ENCODE measurements at regions of chr11 and their contacts with region 1.

Region 1: GRCh38 chr11:64284048-64284961 is at the start of gene BAD:
- DNase-seq: peak; percentile 87 to 95 (median 91)
- ATAC-seq: peak; percentile 77
- H3K4me3 ChIP-seq: peak within 1 kb of the TSS; percentile 97
- H3K4me3 Mint-ChIP-seq: peak within 1 kb of the TSS; percentile 93
- H3K27ac ChIP-seq: peak within 1 kb of the TSS; percentile 99 to 100
- H3K27ac Mint-ChIP-seq: peak within 1 kb of the TSS; percentile 97
- H3K4me1 ChIP-seq: peaks cover 37% of the 10 kb centered on the region
- H3K4me1 Mint-ChIP-seq: peaks cover 21% of the 10 kb centered on the region
- H3K27me3 ChIP-seq: no peaks in the 10 kb centered on the region
- H3K27me3 Mint-ChIP-seq: no peaks in the 10 kb centered on the region
- CTCF ChIP-seq: no peak
- total RNA-seq, gene BAD: 22.5 to 23.0 TPM

Region 2: DNA sequence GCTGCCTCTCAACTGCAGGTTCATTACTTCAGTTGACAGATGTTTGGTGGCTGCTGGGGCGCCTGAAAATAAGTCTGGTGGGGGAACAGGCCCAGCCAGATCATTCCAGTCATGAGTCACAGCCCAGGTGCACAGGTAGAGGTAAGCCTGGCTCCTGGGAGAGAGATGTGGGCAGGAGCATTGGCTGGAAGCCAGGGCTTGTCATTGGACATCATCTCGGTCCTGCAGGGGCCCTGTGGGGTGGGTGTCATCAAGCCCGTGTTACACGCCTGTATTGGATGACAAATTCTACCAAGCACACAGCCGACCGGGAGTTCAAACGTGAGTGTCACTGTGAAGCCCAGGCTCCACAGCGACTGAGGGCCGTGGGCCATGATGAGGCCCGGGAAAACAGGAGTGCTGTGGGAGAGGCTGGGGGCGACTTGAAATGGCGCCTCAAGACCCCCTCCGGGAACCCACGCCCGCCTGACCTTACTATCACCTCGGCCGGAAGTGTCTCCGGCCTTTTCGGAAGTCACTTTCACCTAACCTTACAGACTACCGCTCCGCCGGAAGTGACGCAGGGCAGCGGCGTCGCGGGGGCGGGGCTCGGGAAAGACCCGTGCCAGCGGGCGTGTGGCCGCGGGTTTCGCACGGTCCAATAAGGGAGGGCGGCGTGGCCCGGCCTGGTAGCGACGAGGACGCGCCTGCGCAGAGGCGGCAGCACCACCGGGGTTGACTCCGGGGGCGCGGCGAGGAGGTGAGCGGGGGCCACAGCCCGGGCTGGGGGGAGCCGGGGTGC is 43.7 kb before region 1 on chr11 and contains the start of gene FKBP2:
- CTCF ChIA-PET with region 1: no interaction called
- POLR2A ChIA-PET with region 1: interaction called, 13 read pairs
- intact Hi-C with region 1: loop called (anchors 1 to 2 kb)
- DNase-seq: peak; percentile 92 to 100 (median 97)
- ATAC-seq: peak; percentile 66
- H3K4me3 ChIP-seq: peak within 1 kb of the TSS; percentile 80
- H3K4me3 Mint-ChIP-seq: peak within 1 kb of the TSS; percentile 98
- H3K27ac ChIP-seq: peak within 1 kb of the TSS; percentile 97 to 100
- H3K27ac Mint-ChIP-seq: peak within 1 kb of the TSS; percentile 100
- H3K4me1 ChIP-seq: peaks cover 59% of the 10 kb centered on the region
- H3K4me1 Mint-ChIP-seq: peaks cover 40% of the 10 kb centered on the region
- H3K27me3 ChIP-seq: no peaks in the 10 kb centered on the region
- H3K27me3 Mint-ChIP-seq: no peaks in the 10 kb centered on the region
- CTCF ChIP-seq: no peak
- total RNA-seq, gene FKBP2: 11.2 to 14.6 TPM

Region 3: DNA sequence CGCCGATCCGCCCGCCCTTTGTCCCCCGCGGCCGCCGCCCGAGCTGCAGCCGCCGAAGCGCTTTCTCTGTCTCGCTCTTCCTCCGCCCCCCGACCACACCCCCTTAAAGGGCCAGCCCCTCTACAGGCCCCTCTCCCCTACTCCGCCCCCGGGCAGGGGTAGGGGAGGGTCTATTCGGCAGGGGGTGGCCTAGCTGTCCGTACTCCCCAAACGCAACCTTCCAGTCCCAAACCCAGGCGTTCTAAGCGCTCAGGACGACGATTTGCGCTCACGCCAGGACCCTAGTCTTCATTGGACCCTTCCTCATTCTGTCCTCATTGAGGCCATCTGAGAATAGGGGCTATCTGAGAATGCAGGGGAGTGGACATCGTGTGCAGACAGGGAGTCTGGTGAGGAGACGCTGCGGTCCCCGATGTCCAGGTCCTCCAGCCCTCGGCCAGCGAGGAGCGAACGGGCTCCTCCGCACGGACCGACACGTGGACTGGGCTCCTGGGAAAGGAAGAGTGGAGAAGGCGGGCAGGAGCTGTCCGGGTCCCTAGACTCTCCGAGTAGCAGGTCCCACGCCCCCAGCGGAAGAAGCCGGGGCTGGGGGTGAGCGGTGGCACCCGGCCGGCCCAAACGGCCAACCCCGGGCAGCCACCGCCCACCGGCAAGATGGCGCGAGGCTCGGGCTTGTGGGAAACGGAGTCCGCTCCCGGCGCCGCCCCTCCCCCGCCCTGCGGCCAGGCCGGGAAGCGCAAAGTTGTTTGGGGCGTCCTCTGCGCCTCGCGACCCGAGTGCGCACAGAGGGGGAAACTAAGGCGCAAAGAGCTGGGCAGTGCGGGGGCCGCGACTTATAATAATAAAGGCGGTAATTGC is 37.2 kb before region 1 on chr11 and contains the start of gene PPP1R14B:
- CTCF ChIA-PET with region 1: no interaction called
- POLR2A ChIA-PET with region 1: interaction called, 13 read pairs
- intact Hi-C with region 1: no loop called
- DNase-seq: peak; percentile 60 to 89 (median 76)
- ATAC-seq: peak; percentile 63
- H3K4me3 ChIP-seq: peak within 1 kb of the TSS; percentile 90
- H3K4me3 Mint-ChIP-seq: peak within 1 kb of the TSS; percentile 94
- H3K27ac ChIP-seq: peak within 1 kb of the TSS; percentile 48 to 57
- H3K27ac Mint-ChIP-seq: peak within 1 kb of the TSS; percentile 82
- H3K4me1 ChIP-seq: peaks cover 61% of the 10 kb centered on the region
- H3K4me1 Mint-ChIP-seq: peaks cover 41% of the 10 kb centered on the region
- H3K27me3 ChIP-seq: no peaks in the 10 kb centered on the region
- H3K27me3 Mint-ChIP-seq: no peaks in the 10 kb centered on the region
- CTCF ChIP-seq: no peak
- total RNA-seq, gene PPP1R14B: 17.1 to 21.0 TPM